ENCODE measurements at regions of chr1 and their contacts with region 1.

Region 1: GRCh38 chr1:112619520-112620376 is at the start of gene CAPZA1:
- DNase-seq: peak; percentile 90
- CTCF ChIP-seq: no peak

Region 2: GRCh38 chr1:112390775-112391602 is 228.8 kb before region 1 on chr1:
- in situ Hi-C with region 1: loop called (anchors 10 kb)
- DNase-seq: peak; percentile 86
- CTCF ChIP-seq: peak; percentile 85

Region 3: GRCh38 chr1:112579801-112580510 is 39.8 kb before region 1 on chr1:
- in situ Hi-C with region 1: no loop called
- DNase-seq: no peak
- CTCF ChIP-seq: no peak

Measured in GM13976 (cell line).